ENCODE measurements at regions of chr20 and their contacts with region 1.

Region 1: DNA sequence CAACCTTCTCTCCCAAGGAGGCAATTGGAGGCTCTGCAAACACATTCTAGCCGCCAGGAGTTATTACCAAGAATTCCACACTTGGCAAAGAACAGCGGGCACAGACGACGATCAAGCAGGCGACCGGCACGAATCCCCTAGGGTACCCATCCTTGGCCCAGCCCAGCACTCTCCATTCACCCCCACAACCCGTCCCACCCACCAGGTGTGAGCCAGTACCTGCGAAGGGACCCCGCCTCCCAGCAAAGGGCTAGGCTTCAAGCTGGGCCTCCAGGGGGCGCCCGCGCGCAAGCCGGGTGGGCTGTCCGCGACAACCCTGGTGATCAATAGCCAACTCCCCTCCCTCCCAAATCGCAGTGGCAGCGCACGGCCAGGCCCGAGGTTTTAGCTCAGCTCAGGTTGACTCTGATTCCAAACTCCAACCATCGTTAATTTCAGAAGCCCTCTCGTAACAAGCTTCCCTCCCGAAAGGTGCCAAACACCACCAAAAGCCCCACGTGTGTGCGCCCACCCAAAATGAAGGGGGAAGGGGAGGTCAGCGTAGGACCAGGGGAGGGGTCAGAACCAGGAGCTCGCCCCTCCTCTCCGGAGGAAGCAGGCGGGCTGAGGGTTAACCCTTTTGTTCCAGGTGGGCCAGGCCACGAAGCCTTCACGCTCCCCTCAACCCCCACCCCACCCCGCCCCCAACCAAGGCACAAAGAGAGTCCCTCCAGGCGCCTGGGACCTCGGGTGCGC is 2.1 kb downstream of the SALL4 start:
- DNase-seq: peak; percentile 62
- H3K4me3 ChIP-seq: peak overlapping the region; percentile 49 to 80 (median 78)
- H3K27ac ChIP-seq: no peak overlapping the region
- H3K4me1 ChIP-seq: peaks cover 14% of the 10 kb centered on the region
- H3K27me3 ChIP-seq: peaks cover 10 to 30% of the 10 kb centered on the region in 2 experiments
- CTCF ChIP-seq: peak; percentile 95 to 99
- POLR2A ChIP-seq: no peak

Region 2: GRCh38 chr20:51639206-51639832 is 160.9 kb before region 1 on chr20:
- CTCF ChIA-PET with region 1: interaction called, 8 read pairs
- POLR2A ChIA-PET with region 1: no interaction called
- dilution Hi-C with region 1: no loop called
- intact Hi-C with region 1: loop called (anchors 1 kb)
- DNase-seq: peak; percentile 84
- H3K4me3 ChIP-seq: no peak overlapping the region
- H3K27ac ChIP-seq: no peak overlapping the region
- H3K4me1 ChIP-seq: peaks cover 3% of the 10 kb centered on the region
- H3K27me3 ChIP-seq: no peaks in the 10 kb centered on the region
- CTCF ChIP-seq: peak; percentile 83 to 88
- POLR2A ChIP-seq: no peak

Region 3: DNA sequence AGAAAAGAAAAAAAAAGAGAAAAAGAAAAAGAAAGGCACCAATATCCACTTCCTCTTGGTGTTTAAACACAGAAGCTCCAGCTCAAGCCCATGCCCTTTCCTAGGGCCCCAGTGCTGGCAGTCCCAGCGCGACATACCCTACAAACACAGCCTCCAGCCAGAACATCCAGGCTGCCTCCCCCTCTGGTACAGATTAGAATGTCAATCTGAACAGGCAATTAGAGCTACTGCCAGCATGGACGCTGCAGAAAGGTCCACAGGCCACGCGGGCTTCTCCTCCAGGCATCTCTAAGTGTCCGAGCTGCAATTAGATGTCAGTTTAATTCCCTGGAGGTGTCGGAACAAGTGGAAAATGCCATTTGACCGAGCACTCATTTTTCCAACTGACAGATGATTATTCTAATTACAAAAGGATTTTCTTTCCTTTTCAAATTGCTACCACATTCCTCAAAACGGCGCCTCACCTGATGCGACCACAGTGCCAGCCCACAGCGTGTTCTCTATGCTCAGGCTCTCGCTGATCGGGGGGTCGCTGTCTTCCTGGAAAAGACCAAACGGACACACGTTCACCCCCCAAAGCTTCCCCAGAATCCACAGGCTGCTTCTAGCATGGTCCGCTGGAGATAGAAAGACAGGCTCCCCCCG is 111.5 kb before region 1 on chr20:
- CTCF ChIA-PET with region 1: no interaction called
- POLR2A ChIA-PET with region 1: no interaction called
- dilution Hi-C with region 1: no loop called
- intact Hi-C with region 1: no loop called
- DNase-seq: no peak
- H3K4me3 ChIP-seq: no peak overlapping the region
- H3K27ac ChIP-seq: no peak overlapping the region
- H3K4me1 ChIP-seq: no peaks in the 10 kb centered on the region
- H3K27me3 ChIP-seq: no peaks in the 10 kb centered on the region
- CTCF ChIP-seq: no peak
- POLR2A ChIP-seq: no peak

Region 4: GRCh38 chr20:51760905-51761546 is 39.2 kb before region 1 on chr20:
- CTCF ChIA-PET with region 1: no interaction called
- POLR2A ChIA-PET with region 1: no interaction called
- dilution Hi-C with region 1: no loop called
- intact Hi-C with region 1: no loop called
- DNase-seq: peak; percentile 83
- H3K4me3 ChIP-seq: no peak overlapping the region
- H3K27ac ChIP-seq: no peak overlapping the region
- H3K4me1 ChIP-seq: peaks cover 6% of the 10 kb centered on the region
- H3K27me3 ChIP-seq: no peaks in the 10 kb centered on the region
- CTCF ChIP-seq: no peak
- POLR2A ChIP-seq: no peak

Region 5: DNA sequence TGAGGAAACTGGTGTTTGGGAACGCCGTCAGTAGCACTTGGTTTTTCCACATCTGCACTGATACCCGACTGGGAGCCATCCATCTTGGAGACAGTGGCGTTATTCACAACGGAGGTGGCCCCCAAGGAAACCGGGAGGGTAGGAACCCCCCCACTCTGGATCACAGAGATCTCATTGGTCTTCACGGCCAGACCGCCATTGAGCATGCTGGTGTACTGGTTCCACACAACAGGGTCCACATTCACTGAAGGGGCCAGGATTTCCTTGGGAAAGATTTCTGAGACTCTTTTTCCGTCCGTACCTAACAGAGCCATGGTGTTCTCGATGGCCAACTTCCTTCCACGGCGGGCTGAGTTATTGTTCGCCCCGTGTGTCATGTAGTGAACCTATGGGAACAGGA is 15.9 kb before region 1 on chr20:
- CTCF ChIA-PET with region 1: interaction called, 21 read pairs
- POLR2A ChIA-PET with region 1: no interaction called
- dilution Hi-C with region 1: no loop called
- intact Hi-C with region 1: no loop called
- DNase-seq: no peak
- H3K4me3 ChIP-seq: no peak overlapping the region
- H3K27ac ChIP-seq: no peak overlapping the region
- H3K4me1 ChIP-seq: no peaks in the 10 kb centered on the region
- H3K27me3 ChIP-seq: no peaks in the 10 kb centered on the region
- CTCF ChIP-seq: no peak
- POLR2A ChIP-seq: no peak

Region 6: DNA sequence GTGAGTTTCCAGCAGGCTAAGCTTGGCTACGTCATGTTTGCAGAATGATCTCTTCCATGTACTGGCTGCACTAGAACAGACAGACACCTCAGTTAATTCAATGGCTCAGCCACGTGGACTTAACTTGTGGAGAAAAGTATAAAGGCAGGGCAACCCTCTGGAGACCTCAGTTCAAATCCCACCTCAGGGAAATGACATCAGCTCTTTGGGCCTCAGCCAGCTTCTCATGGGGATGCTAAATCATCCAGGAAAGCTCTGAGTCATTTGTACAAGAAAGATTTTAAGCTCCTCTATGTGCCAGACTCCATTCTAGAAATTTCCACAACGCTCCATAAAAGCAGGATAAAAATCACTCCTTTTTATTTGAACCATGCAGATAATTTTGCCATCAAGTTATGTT is 130.5 kb after region 1 on chr20:
- CTCF ChIA-PET with region 1: interaction called, 7 read pairs
- POLR2A ChIA-PET with region 1: no interaction called
- dilution Hi-C with region 1: no loop called
- intact Hi-C with region 1: loop called (anchors 2 kb)
- DNase-seq: peak; percentile 95
- H3K4me3 ChIP-seq: no peak overlapping the region
- H3K27ac ChIP-seq: peak overlapping the region; percentile 79
- H3K4me1 ChIP-seq: peaks cover 51% of the 10 kb centered on the region
- H3K27me3 ChIP-seq: no peaks in the 10 kb centered on the region
- CTCF ChIP-seq: no peak
- POLR2A ChIP-seq: no peak

Region 7: GRCh38 chr20:51966291-51966971 is 166.2 kb after region 1 on chr20:
- CTCF ChIA-PET with region 1: interaction called, 64 read pairs
- POLR2A ChIA-PET with region 1: no interaction called
- dilution Hi-C with region 1: no loop called
- intact Hi-C with region 1: loop called (anchors 1 kb)
- DNase-seq: peak; percentile 77
- H3K4me3 ChIP-seq: no peak overlapping the region
- H3K27ac ChIP-seq: no peak overlapping the region
- H3K4me1 ChIP-seq: no peaks in the 10 kb centered on the region
- H3K27me3 ChIP-seq: no peaks in the 10 kb centered on the region
- CTCF ChIP-seq: peak; percentile 73 to 74
- POLR2A ChIP-seq: no peak

Region 8: DNA sequence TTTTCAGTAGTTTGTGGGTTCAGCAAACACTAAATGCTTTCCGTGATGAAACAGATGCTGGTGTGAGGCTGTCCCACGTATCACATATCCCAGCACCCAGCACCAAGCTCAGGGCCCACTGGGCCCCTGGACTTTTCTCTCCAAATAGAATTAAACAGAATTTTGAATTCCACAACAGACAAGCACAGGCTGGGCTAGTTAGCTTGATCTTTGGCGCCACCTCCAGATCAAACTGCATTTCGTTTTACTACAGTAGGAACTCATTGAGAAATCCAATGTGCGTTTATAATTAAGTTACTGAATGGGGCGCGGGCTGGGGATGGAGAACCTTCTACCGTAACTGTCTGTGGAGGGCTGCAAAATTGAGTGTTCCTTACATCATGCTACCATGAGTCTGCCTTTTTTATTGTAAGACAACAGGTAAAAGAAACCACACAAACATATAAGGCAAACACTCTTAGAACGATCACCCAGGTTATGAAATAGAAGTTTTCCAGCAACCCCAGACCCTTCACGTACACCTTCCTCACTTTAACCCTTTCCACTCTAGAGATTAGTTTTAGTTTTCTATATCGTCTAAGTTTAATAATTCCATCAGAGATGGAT is 283.5 kb after region 1 on chr20:
- CTCF ChIA-PET with region 1: interaction called, 18 read pairs
- POLR2A ChIA-PET with region 1: no interaction called
- dilution Hi-C with region 1: no loop called
- intact Hi-C with region 1: loop called (anchors 2 kb)
- DNase-seq: peak; percentile 75
- H3K4me3 ChIP-seq: no peak overlapping the region
- H3K27ac ChIP-seq: no peak overlapping the region
- H3K4me1 ChIP-seq: no peaks in the 10 kb centered on the region
- H3K27me3 ChIP-seq: no peaks in the 10 kb centered on the region
- CTCF ChIP-seq: peak; percentile 51 to 56
- POLR2A ChIP-seq: no peak

Measured in endothelial cell of umbilical vein (primary cell).